Right lobe of liver (tissue), 6 donors: ENCODE measurements at regions of chr14 and their contacts with region 1.

Region 1: DNA sequence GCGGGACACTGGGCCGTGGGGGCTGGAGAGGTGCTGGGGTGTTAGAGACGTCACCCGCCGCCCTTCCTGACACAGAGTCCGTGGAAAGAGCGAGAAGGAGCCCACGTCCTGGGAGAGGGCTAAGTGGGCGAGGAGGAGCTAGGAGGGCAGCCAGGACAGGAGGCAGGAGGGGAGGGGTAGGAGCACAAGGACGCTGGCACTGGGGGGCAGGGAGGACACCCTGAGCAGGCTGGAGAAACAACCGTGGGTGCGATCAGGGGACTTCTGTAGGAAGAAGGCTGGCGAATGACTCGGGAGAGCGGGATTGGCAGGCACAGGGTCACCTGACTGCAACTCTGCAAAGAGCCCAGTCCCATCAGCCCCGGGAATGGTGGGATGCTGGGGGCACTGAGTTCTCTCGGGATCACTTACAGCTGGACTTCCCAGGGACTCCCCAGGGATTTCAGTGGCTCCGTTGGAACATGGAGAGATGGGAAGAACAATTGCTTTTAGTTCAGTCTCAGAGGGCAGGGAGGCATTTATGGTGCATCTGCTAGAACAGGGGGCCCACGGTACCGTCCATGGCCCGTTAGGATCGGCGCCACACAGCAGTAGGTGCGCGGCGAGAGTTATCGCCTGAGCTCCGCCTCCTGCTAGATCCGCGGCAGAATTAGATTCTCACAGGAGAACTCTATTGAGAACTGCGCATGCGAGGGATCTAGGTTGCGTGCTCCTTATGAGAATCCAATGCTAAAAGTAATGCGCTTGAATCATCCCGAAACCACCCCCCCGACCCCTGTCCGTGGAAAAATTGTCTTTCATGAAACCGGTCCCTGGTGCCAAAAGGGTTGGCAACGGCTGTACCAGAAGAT is 24.3 kb downstream of the UBR7 start:
- DNase-seq: no peak
- ATAC-seq: peak; percentile 31 to 66 (median 52)
- H3K4me3 ChIP-seq: peak overlapping the region in 2 of 3 donors; percentile 0 to 26
- H3K27ac ChIP-seq: no peak overlapping the region
- H3K4me1 ChIP-seq: no peaks in the 10 kb centered on the region
- H3K27me3 ChIP-seq: no peaks in the 10 kb centered on the region
- CTCF ChIP-seq: no peak
- POLR2A ChIP-seq: no peak

Region 2: GRCh38 chr14:93173943-93174395 is 57.4 kb before region 1 on chr14:
- intact Hi-C with region 1: no loop called
- DNase-seq: peak in 1 of 3 donors; percentile 23
- ATAC-seq: peak in 1 of 4 donors; percentile 12
- H3K4me3 ChIP-seq: no peak overlapping the region
- H3K27ac ChIP-seq: no peak overlapping the region
- H3K4me1 ChIP-seq: no peaks in the 10 kb centered on the region
- H3K27me3 ChIP-seq: no peaks in the 10 kb centered on the region
- CTCF ChIP-seq: no peak
- POLR2A ChIP-seq: no peak

Region 3: DNA sequence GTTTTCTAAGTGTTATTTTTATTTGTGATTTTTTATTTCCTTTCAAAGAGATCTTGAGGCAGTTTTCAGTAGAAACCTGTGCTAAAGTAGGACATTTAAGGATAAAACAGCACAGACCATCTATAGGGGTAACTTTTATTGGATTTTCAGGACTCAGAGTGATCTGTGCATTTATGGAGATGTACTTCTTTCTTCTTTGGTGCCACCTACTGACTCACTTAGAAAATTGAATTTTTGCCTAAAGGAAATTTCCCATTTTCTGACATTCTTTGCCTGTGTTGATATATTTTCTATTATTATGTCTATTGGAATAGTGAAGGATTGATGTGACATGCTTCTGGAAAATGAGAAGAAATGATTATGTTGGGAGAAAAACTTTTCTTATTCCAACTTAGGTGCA is 312.4 kb after region 1 on chr14:
- intact Hi-C with region 1: loop called in 1 of 2 experiments (anchors 10 kb)
- DNase-seq: no peak
- ATAC-seq: peak in 1 of 4 donors; percentile 28
- H3K4me3 ChIP-seq: no peak overlapping the region
- H3K27ac ChIP-seq: no peak overlapping the region
- H3K4me1 ChIP-seq: no peaks in the 10 kb centered on the region
- H3K27me3 ChIP-seq: no peaks in the 10 kb centered on the region
- CTCF ChIP-seq: peak; percentile 21 to 39 (median 34)
- POLR2A ChIP-seq: no peak